B cell (primary cell): ENCODE measurements at regions of chr2 and their contacts with region 1.

Region 1: GRCh38 chr2:74178201-74179062 is at the start of gene MOB1A:
- DNase-seq: peak; percentile 99
- ATAC-seq: peak; percentile 86
- H3K4me3 ChIP-seq: peak within 1 kb of the TSS; percentile 73 to 95 (median 82)
- H3K4me3 Mint-ChIP-seq: peak within 1 kb of the TSS; percentile 86
- H3K27ac ChIP-seq: peak within 1 kb of the TSS; percentile 97 to 99
- H3K27ac Mint-ChIP-seq: peak within 1 kb of the TSS; percentile 99
- H3K4me1 ChIP-seq: peaks cover 52 to 66% of the 10 kb centered on the region in 2 donors
- H3K4me1 Mint-ChIP-seq: peaks cover 49% of the 10 kb centered on the region
- H3K27me3 ChIP-seq: no peaks in the 10 kb centered on the region
- H3K27me3 Mint-ChIP-seq: no peaks in the 10 kb centered on the region
- CTCF ChIP-seq: no peak
- total RNA-seq, gene MOB1A: 219 and 227 TPM in 2 replicates

Region 2: DNA sequence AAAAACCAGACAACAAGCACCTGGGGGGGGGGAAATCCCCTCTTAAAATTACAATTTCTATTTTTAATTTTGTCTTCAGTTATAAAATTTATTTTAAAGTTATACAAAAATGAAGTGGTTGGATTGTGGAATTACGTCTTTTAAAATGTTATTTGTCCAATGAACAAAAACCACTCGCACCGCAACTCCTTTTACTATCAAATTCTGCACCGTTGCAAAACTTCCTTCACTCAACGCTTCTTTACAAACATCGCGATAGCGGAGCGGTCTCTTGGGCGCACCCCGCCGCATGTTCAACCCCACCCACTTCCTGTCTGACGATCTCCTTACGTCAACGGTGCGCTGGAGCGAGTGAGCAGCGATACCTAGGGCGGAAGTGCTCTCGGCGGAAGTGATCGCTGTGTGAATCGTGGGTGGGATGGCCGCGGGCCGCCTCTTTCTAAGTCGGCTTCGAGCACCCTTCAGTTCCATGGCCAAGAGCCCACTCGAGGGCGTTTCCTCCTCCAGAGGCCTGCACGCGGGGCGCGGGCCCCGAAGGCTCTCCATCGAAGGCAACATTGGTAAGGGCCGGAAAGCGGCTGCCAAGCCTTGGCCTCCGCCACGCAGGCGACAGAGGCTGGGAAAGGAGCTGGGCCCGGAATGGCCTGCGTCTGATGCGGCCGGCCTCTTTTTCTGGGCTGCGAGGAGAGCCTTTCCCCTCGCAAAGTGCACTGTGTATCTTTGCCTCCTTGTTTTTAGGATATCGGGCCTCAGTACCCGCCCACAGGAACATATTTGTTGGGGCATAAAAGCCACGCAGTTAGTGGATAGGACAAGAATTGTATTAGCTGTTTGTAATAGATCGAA is 251.7 kb before region 1 on chr2 and contains the start of gene DGUOK:
- CTCF ChIA-PET with region 1: no interaction called
- POLR2A ChIA-PET with region 1: no interaction called
- intact Hi-C with region 1: loop called (anchors 1 kb)
- DNase-seq: peak; percentile 99
- ATAC-seq: peak; percentile 98
- H3K4me3 ChIP-seq: peak within 1 kb of the TSS; percentile 69 to 89 (median 76)
- H3K4me3 Mint-ChIP-seq: peak within 1 kb of the TSS; percentile 86
- H3K27ac ChIP-seq: peak within 1 kb of the TSS; percentile 95 to 99
- H3K27ac Mint-ChIP-seq: peak within 1 kb of the TSS; percentile 90
- H3K4me1 ChIP-seq: peaks cover 33 to 37% of the 10 kb centered on the region in 2 donors
- H3K4me1 Mint-ChIP-seq: peaks cover 61% of the 10 kb centered on the region
- H3K27me3 ChIP-seq: no peaks in the 10 kb centered on the region
- H3K27me3 Mint-ChIP-seq: no peaks in the 10 kb centered on the region
- CTCF ChIP-seq: no peak
- total RNA-seq, gene DGUOK: 61.7 and 65.4 TPM in 2 replicates

Region 3: GRCh38 chr2:73985308-73986084 is 192.9 kb before region 1 on chr2:
- CTCF ChIA-PET with region 1: no interaction called
- POLR2A ChIA-PET with region 1: no interaction called
- intact Hi-C with region 1: loop called (anchors 1 kb)
- DNase-seq: peak; percentile 92
- ATAC-seq: peak; percentile 72
- H3K4me3 ChIP-seq: peak overlapping the region; percentile 53 to 78 (median 66)
- H3K4me3 Mint-ChIP-seq: peak overlapping the region; percentile 82
- H3K27ac ChIP-seq: peak overlapping the region; percentile 71 to 72
- H3K27ac Mint-ChIP-seq: peak overlapping the region; percentile 89
- H3K4me1 ChIP-seq: peaks cover 55 to 66% of the 10 kb centered on the region in 2 donors
- H3K4me1 Mint-ChIP-seq: peaks cover 77% of the 10 kb centered on the region
- H3K27me3 ChIP-seq: peaks cover 0 to 3% (median under 1%) of the 10 kb centered on the region in 4 experiments
- H3K27me3 Mint-ChIP-seq: no peaks in the 10 kb centered on the region
- CTCF ChIP-seq: no peak

Region 4: DNA sequence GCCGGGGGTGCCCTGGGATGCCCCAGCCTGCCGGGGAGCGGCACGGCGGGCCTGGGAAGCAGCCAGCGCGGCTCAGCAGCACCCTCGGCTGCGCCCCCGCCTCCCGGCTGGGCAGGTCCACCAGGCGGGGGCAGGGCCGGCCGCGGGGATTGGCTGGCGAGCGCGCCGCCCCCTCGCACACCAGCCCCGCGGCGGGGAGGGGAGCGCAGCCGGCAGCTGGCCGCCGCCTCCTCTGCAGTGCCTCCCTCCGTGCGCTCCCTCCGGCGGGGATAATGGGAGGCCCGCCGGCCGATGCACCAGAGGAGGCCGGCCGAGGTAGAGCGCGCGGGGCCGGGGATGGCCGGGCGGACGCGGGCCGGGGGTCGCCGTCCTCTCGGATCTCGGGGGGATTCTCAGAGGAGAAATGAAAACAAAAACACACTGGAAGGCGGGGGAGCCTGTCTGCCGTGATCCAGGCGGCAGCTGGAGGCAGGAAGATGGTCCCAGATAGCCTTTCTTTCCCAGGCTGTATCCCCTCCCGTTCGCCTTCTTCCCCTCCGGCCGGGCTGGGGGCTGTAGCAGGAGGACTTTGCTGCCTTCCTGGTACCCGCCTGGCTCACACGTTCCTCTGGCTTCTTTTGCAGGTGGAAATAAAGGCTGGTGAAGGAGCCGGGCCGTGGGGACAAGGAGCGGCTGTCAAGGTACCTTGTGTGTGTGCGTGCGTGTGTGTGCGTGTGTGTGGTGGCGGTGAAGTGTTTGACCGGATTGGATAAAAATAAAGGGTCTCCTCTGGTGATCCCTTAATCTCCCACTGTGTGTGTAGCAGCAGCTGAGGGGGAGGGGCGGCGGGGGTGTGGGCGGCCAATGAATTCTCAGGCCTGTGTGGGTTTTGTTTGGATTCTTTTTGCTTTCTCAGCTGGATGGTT is 175.7 kb before region 1 on chr2:
- CTCF ChIA-PET with region 1: no interaction called
- POLR2A ChIA-PET with region 1: no interaction called
- intact Hi-C with region 1: no loop called
- DNase-seq: peak; percentile 86
- ATAC-seq: peak; percentile 98
- H3K4me3 ChIP-seq: peak overlapping the region in 4 of 5 experiments; percentile 35 to 60 (median 52)
- H3K4me3 Mint-ChIP-seq: peak overlapping the region; percentile 87
- H3K27ac ChIP-seq: no peak overlapping the region
- H3K27ac Mint-ChIP-seq: peak overlapping the region; percentile 53
- H3K4me1 ChIP-seq: peaks cover 15 to 29% of the 10 kb centered on the region in 2 donors
- H3K4me1 Mint-ChIP-seq: peaks cover 66% of the 10 kb centered on the region
- H3K27me3 ChIP-seq: no peaks in the 10 kb centered on the region
- H3K27me3 Mint-ChIP-seq: no peaks in the 10 kb centered on the region
- CTCF ChIP-seq: no peak

Region 5: DNA sequence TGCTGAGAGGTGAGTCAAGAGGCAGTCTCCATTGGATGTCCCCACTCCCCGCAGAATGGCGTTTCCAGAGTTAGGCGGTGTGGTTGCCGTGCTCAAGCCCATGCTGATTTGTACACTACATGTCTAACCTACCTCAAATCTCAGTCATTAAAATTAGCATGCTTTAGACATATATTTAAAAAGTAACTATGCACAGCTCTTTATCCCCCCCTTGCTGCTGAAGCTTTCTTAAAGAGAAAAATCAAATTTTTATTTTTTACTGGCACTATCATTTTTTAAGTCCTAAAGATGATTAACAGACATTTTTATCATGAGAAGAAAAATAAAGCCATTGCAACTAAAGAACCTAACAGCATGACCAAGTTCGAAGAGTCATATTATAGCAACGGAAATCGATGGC is 73.6 kb before region 1 on chr2:
- CTCF ChIA-PET with region 1: no interaction called
- POLR2A ChIA-PET with region 1: no interaction called
- intact Hi-C with region 1: no loop called
- DNase-seq: no peak
- ATAC-seq: no peak
- H3K4me3 ChIP-seq: no peak overlapping the region
- H3K4me3 Mint-ChIP-seq: no peak overlapping the region
- H3K27ac ChIP-seq: no peak overlapping the region
- H3K27ac Mint-ChIP-seq: no peak overlapping the region
- H3K4me1 ChIP-seq: no peaks in the 10 kb centered on the region
- H3K4me1 Mint-ChIP-seq: no peaks in the 10 kb centered on the region
- H3K27me3 ChIP-seq: no peaks in the 10 kb centered on the region
- H3K27me3 Mint-ChIP-seq: no peaks in the 10 kb centered on the region
- CTCF ChIP-seq: peak; percentile 51

Region 6: GRCh38 chr2:74147727-74148456 is 30.5 kb before region 1 on chr2 and contains the start of gene BOLA3:
- CTCF ChIA-PET with region 1: interaction called, 21 read pairs
- POLR2A ChIA-PET with region 1: interaction called, 12 read pairs
- intact Hi-C with region 1: loop called (anchors 2 kb)
- DNase-seq: peak; percentile 88
- ATAC-seq: peak; percentile 98
- H3K4me3 ChIP-seq: peak within 1 kb of the TSS; percentile 58 to 92 (median 67)
- H3K4me3 Mint-ChIP-seq: no peak within 1 kb of the TSS
- H3K27ac ChIP-seq: peak within 1 kb of the TSS; percentile 38 to 56
- H3K27ac Mint-ChIP-seq: no peak within 1 kb of the TSS
- H3K4me1 ChIP-seq: peaks cover 16 to 20% of the 10 kb centered on the region in 2 donors
- H3K4me1 Mint-ChIP-seq: peaks cover 9% of the 10 kb centered on the region
- H3K27me3 ChIP-seq: no peaks in the 10 kb centered on the region
- H3K27me3 Mint-ChIP-seq: no peaks in the 10 kb centered on the region
- CTCF ChIP-seq: peak; percentile 80
- total RNA-seq, gene BOLA3: 6.5 and 7.5 TPM in 2 replicates

Region 7: DNA sequence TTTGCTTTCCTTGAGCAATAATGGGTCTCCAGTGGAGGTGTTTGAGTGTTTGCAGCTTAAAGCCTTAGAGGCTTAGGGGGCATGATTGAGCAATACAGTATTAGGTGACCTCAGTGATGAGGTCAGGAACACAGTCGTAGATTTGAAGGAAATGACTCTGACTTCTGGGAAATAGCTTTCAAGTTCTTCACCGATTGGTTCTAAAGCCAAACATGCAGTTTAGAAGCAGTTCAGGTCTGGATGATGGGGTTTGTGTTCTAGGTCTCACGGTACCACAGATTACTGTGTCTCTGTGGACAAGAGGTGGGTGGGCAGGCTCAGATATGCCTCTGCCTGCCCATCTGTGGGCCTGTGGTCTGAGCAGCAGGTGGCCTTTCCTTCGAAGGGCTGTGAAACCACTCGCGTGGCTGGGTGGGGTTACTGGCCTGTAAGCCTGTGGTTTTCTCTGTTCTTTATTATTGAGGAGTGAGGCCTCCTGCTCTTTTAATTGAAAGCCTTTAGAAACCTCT is 27.8 kb after region 1 on chr2:
- CTCF ChIA-PET with region 1: interaction called, 132 read pairs
- POLR2A ChIA-PET with region 1: interaction called, 120 read pairs
- intact Hi-C with region 1: loop called (anchors 5 kb)
- DNase-seq: peak; percentile 69
- ATAC-seq: peak; percentile 70
- H3K4me3 ChIP-seq: peak overlapping the region in 3 of 5 experiments; percentile 0 to 17 (median 5)
- H3K4me3 Mint-ChIP-seq: peak overlapping the region; percentile 47
- H3K27ac ChIP-seq: peak overlapping the region; percentile 76 to 80
- H3K27ac Mint-ChIP-seq: peak overlapping the region; percentile 88
- H3K4me1 ChIP-seq: peaks cover 24 to 26% of the 10 kb centered on the region in 2 donors
- H3K4me1 Mint-ChIP-seq: peaks cover 31% of the 10 kb centered on the region
- H3K27me3 ChIP-seq: no peaks in the 10 kb centered on the region
- H3K27me3 Mint-ChIP-seq: no peaks in the 10 kb centered on the region
- CTCF ChIP-seq: no peak

Region 8: GRCh38 chr2:74334931-74335333 is 156.5 kb after region 1 on chr2:
- CTCF ChIA-PET with region 1: interaction called, 13 read pairs
- POLR2A ChIA-PET with region 1: no interaction called
- intact Hi-C with region 1: no loop called
- DNase-seq: peak; percentile 76
- ATAC-seq: peak; percentile 74
- H3K4me3 ChIP-seq: no peak overlapping the region
- H3K4me3 Mint-ChIP-seq: no peak overlapping the region
- H3K27ac ChIP-seq: no peak overlapping the region
- H3K27ac Mint-ChIP-seq: no peak overlapping the region
- H3K4me1 ChIP-seq: no peaks in the 10 kb centered on the region
- H3K4me1 Mint-ChIP-seq: no peaks in the 10 kb centered on the region
- H3K27me3 ChIP-seq: no peaks in the 10 kb centered on the region
- H3K27me3 Mint-ChIP-seq: no peaks in the 10 kb centered on the region
- CTCF ChIP-seq: peak; percentile 100

Region 9: DNA sequence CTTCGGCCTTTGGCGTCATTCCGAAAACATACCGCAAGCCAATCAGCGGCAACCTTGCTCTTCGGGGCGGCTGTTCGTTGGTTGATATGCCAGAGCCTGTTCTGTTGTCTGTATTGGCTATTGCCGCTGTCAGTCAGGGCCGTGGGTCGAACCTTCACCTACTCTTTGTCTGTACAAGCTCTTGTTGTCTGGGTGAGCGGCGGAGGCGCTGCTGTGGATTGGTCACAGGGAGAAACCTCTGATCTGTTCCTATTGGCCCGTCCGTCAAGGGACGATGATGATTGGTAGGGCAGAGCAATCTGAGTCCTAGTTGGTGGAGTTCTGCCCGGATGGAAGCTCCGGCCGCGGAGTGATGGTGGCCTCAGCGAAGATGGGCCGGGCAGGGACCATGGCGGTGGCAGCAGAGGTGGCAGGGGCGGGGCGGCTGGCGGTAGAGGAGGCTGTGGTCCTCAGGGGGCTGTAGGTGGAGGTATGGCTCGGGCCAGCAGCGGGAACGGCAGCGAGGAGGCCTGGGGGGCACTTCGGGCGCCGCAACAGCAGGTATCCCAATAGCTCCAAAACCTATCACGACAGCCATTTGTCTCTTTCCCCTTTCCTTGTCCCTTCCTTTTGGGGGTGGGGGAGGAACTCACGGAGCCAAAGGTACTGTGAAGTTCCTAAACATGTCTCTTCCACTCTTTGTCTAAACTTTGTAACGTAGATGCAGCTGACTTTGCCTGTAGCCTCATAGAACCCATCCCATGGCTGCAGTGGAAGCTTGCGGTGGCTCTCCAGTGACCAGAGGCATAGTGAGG is 279.9 kb after region 1 on chr2 and contains the start of gene WBP1:
- CTCF ChIA-PET with region 1: no interaction called
- POLR2A ChIA-PET with region 1: interaction called, 8 read pairs
- intact Hi-C with region 1: loop called (anchors 5 kb)
- DNase-seq: peak; percentile 100
- ATAC-seq: peak; percentile 79
- H3K4me3 ChIP-seq: peak within 1 kb of the TSS; percentile 80 to 100 (median 93)
- H3K4me3 Mint-ChIP-seq: peak within 1 kb of the TSS; percentile 94
- H3K27ac ChIP-seq: peak within 1 kb of the TSS; percentile 97 to 100
- H3K27ac Mint-ChIP-seq: peak within 1 kb of the TSS; percentile 99
- H3K4me1 ChIP-seq: peaks cover 33 to 40% of the 10 kb centered on the region in 2 donors
- H3K4me1 Mint-ChIP-seq: peaks cover 56% of the 10 kb centered on the region
- H3K27me3 ChIP-seq: no peaks in the 10 kb centered on the region
- H3K27me3 Mint-ChIP-seq: no peaks in the 10 kb centered on the region
- CTCF ChIP-seq: no peak
- total RNA-seq, gene WBP1: 91.5 and 98.4 TPM in 2 replicates

Region 10: GRCh38 chr2:74632209-74632938 is 453.9 kb after region 1 on chr2:
- CTCF ChIA-PET with region 1: no interaction called
- POLR2A ChIA-PET with region 1: no interaction called
- intact Hi-C with region 1: no loop called
- DNase-seq: no peak
- ATAC-seq: no peak
- H3K4me3 ChIP-seq: no peak overlapping the region
- H3K4me3 Mint-ChIP-seq: no peak overlapping the region
- H3K27ac ChIP-seq: no peak overlapping the region
- H3K27ac Mint-ChIP-seq: no peak overlapping the region
- H3K4me1 ChIP-seq: no peaks in the 10 kb centered on the region
- H3K4me1 Mint-ChIP-seq: no peaks in the 10 kb centered on the region
- H3K27me3 ChIP-seq: no peaks in the 10 kb centered on the region
- H3K27me3 Mint-ChIP-seq: peaks cover 14% of the 10 kb centered on the region
- CTCF ChIP-seq: no peak